Mammary epithelial cell (primary cell): ENCODE measurements at regions of chr1 and their contacts with region 1.

Region 1: DNA sequence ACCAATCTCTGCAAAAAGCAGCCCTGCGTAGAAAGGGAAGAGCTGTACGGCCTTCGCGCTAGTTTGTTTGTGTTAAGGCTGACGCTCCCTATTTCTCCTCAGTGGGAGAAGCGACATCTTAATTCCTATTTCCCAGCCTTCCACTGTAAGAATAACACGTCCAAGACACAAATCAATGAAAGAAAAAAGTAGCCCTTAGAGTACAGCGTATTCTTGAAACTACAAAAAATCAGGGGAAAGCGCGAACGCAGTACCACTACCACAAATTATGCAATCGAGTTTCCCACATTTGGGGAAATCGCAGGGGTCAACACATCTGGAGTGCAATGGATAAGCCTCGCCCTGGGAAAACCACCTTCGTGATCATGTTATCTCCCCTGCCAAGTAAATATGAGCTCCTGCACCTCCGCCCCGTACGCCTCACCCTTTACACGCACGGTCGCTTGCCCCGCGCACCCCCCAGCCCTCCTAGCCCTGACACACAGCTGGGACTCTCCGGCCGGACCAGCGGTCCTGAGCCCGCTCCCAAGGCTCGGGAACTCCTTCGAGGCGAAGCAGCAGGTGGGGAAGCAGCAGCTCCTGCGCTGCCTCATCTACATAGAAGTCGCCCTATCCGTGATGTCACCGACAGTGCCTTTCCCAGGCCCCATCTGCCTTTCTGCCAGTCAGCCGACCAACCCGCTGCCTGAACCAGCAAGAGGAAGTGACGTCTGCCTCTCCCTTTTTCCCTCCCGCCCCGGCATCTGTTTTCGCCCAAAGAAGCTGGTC is 94.7 kb downstream of the PPIAL4G start:
- DNase-seq: peak; percentile 93
- H3K4me3 ChIP-seq: peak overlapping the region; percentile 20 to 58 (median 48)
- H3K27ac ChIP-seq: peak overlapping the region; percentile 86
- H3K4me1 ChIP-seq: peaks cover 8% of the 10 kb centered on the region
- H3K27me3 ChIP-seq: no peaks in the 10 kb centered on the region
- CTCF ChIP-seq: no peak

Region 2: DNA sequence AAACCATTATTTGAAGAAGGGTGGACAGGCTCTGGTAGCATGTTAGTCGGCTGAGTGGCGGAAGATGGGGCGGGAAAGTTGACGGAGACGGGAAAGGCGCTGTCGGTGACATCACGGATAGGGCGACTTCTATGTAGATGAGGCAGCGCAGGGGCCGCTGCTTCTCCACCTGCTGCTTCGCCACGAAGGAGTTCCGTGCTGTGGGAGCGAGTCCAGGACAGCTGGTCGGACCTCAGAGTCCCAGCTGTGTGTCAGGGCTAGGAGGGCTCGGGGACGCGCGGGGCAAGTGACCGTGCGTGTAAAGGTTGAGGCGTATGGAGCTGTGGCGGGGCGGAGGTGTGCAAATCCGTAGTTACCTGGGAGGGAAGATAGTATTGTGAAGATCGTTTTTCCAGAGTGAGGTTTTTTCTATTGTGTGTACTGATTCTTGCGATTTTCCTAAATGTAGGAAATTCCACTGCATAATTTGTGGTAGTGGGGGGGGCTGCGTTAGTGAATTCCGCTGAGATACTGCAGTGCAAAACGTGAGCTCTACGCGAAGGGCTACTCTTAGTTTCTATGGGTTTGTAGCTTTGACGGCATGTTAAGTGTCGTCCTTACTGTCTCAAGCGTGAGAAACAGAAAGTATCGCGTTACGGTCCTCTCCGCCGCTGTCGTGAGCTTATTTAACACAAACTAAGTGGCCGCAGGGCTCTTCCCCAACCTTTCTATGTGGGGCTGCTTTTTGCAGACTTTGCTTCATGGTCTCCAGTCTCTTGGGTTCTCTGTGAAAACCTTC is 125.1 kb before region 1 on chr1:
- CTCF ChIA-PET with region 1: no interaction called
- dilution Hi-C with region 1: no loop called
- in situ Hi-C with region 1: no loop called
- intact Hi-C with region 1: loop called (anchors 2 kb)
- DNase-seq: peak; percentile 100
- H3K4me3 ChIP-seq: peak overlapping the region; percentile 42 to 59 (median 54)
- H3K27ac ChIP-seq: peak overlapping the region; percentile 98
- H3K4me1 ChIP-seq: peaks cover 13% of the 10 kb centered on the region
- H3K27me3 ChIP-seq: no peaks in the 10 kb centered on the region
- CTCF ChIP-seq: no peak

Region 3: GRCh38 chr1:148318123-148318903 is 70.1 kb before region 1 on chr1:
- CTCF ChIA-PET with region 1: no interaction called
- dilution Hi-C with region 1: no loop called
- in situ Hi-C with region 1: no loop called
- intact Hi-C with region 1: no loop called
- DNase-seq: no peak
- H3K4me3 ChIP-seq: no peak overlapping the region
- H3K27ac ChIP-seq: no peak overlapping the region
- H3K4me1 ChIP-seq: no peaks in the 10 kb centered on the region
- H3K27me3 ChIP-seq: no peaks in the 10 kb centered on the region
- CTCF ChIP-seq: no peak

Region 4: DNA sequence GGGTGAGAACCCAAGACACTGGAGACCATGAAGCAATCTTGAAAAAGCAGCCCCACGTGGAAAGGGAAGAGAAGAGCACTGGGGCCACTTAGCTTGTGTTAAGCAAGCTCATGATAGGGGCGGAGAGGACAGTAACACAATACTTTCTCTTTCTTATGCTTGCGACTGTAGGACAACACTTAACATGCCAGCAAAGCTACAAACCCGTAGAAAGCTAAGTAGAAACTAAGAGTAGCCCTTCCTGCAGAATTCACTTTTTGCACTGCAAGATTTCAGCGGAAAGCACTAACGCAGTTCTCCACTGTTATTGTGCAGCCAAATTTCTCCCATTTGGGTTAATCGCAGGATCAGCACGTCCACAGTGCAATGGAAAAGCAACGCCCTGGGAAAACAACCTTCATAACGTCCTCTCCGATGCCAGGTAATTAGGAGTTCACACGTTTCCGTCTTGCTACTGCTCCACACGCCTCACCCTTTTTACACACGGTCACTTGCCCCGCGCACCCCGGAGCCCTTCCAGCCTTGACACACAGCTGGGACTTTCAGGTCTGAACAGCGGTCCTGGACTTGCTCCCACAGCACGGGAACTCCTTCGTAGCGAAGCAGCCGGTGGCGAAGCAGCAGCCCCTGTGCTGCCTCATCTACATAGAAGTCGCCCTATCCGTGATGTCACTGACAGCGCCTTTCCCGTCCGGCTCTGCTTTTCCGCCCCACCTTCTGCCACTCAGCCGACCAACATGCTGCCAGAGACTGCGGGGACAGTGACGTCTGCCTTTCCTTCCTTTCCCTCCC is 53.9 kb before region 1 on chr1:
- CTCF ChIA-PET with region 1: no interaction called
- dilution Hi-C with region 1: no loop called
- in situ Hi-C with region 1: no loop called
- intact Hi-C with region 1: loop called (anchors 5 kb)
- DNase-seq: peak; percentile 98
- H3K4me3 ChIP-seq: peak overlapping the region; percentile 33 to 57 (median 53)
- H3K27ac ChIP-seq: peak overlapping the region; percentile 95
- H3K4me1 ChIP-seq: peaks cover 16% of the 10 kb centered on the region
- H3K27me3 ChIP-seq: no peaks in the 10 kb centered on the region
- CTCF ChIP-seq: no peak

Region 5: GRCh38 chr1:148347781-148348180 is 40.7 kb before region 1 on chr1:
- CTCF ChIA-PET with region 1: interaction called, 3 read pairs
- dilution Hi-C with region 1: no loop called
- in situ Hi-C with region 1: no loop called
- intact Hi-C with region 1: loop called (anchors 1 kb)
- DNase-seq: no peak
- H3K4me3 ChIP-seq: no peak overlapping the region
- H3K27ac ChIP-seq: no peak overlapping the region
- H3K4me1 ChIP-seq: no peaks in the 10 kb centered on the region
- H3K27me3 ChIP-seq: peaks cover 2% of the 10 kb centered on the region
- CTCF ChIP-seq: no peak